Naive thymus-derived CD4-positive, alpha-beta T cell (primary cell): ENCODE measurements at regions of chr2 and their contacts with region 1.

Region 1: DNA sequence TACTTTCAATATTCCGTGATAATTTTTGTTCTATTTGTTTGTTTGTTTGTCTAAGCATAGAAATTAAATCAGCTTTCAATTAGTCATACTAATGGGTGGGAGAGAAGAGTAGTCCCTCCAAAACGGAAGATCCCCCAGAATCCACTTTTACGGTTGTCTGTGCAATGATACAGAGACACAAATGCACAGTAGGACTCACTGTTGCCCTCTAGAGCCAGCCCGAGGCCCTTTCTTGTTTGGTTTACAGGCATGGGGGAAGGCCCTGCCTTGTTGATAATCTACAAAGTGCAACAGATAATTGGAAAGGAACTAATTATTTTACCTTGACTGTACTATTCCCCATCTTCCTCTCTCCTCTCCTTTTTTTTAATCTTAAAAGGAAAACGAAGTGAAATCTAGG is 121.1 kb downstream of the ACOXL start:
- DNase-seq: peak in 6 of 9 donors; percentile 25 to 46 (median 40)
- ATAC-seq: peak; percentile 24
- H3K4me3 ChIP-seq: no peak overlapping the region
- H3K4me3 Mint-ChIP-seq: peak overlapping the region in 7 of 10 donors; percentile 4 to 60 (median 33)
- H3K27ac ChIP-seq: no peak overlapping the region
- H3K27ac Mint-ChIP-seq: peak overlapping the region in 7 of 9 donors; percentile 32 to 77 (median 48)
- H3K4me1 ChIP-seq: peaks cover 29 to 44% of the 10 kb centered on the region in 2 donors
- H3K4me1 Mint-ChIP-seq: peaks cover 36 to 71% (median 47%) of the 10 kb centered on the region in 7 donors
- H3K27me3 ChIP-seq: no peaks in the 10 kb centered on the region
- H3K27me3 Mint-ChIP-seq: peaks cover 0 to 50% (median 0%) of the 10 kb centered on the region in 5 donors

Region 2: GRCh38 chr2:110748489-110748867 is 105.0 kb before region 1 on chr2:
- CTCF ChIA-PET with region 1: no interaction called
- POLR2A ChIA-PET with region 1: no interaction called
- intact Hi-C with region 1: loop called in 1 of 2 experiments (anchors 5 kb)
- DNase-seq: peak in 6 of 9 donors; percentile 7 to 77 (median 16)
- ATAC-seq: peak; percentile 86
- H3K4me3 ChIP-seq: peak overlapping the region; percentile 0
- H3K4me3 Mint-ChIP-seq: peak overlapping the region in 9 of 10 donors; percentile 7 to 72 (median 43)
- H3K27ac ChIP-seq: no peak overlapping the region
- H3K27ac Mint-ChIP-seq: peak overlapping the region in 1 of 9 donors; percentile 79
- H3K4me1 ChIP-seq: peaks cover 11 to 13% of the 10 kb centered on the region in 2 donors
- H3K4me1 Mint-ChIP-seq: peaks cover 12 to 45% (median 16%) of the 10 kb centered on the region in 7 donors
- H3K27me3 ChIP-seq: no peaks in the 10 kb centered on the region
- H3K27me3 Mint-ChIP-seq: peaks cover 34 to 53% (median 37%) of the 10 kb centered on the region in 5 donors

Region 3: GRCh38 chr2:110807522-110807921 is 46.0 kb before region 1 on chr2:
- CTCF ChIA-PET with region 1: interaction called, 7 read pairs
- POLR2A ChIA-PET with region 1: interaction called, 3 read pairs
- intact Hi-C with region 1: loop called (anchors 1 kb)
- DNase-seq: no peak
- ATAC-seq: no peak
- H3K4me3 ChIP-seq: no peak overlapping the region
- H3K4me3 Mint-ChIP-seq: no peak overlapping the region
- H3K27ac ChIP-seq: no peak overlapping the region
- H3K27ac Mint-ChIP-seq: no peak overlapping the region
- H3K4me1 ChIP-seq: peaks cover 0 to 3% of the 10 kb centered on the region in 2 donors
- H3K4me1 Mint-ChIP-seq: peaks cover 0 to 20% (median 6%) of the 10 kb centered on the region in 7 donors
- H3K27me3 ChIP-seq: peaks cover 0 to 3% of the 10 kb centered on the region in 2 donors
- H3K27me3 Mint-ChIP-seq: peaks cover 20 to 40% (median 27%) of the 10 kb centered on the region in 5 donors

Region 4: GRCh38 chr2:110865188-110865587 is 11.7 kb after region 1 on chr2:
- CTCF ChIA-PET with region 1: no interaction called
- POLR2A ChIA-PET with region 1: no interaction called
- intact Hi-C with region 1: loop called in 1 of 2 experiments (anchors 2 kb)
- DNase-seq: peak in 1 of 9 donors; percentile 48
- ATAC-seq: peak; percentile 35
- H3K4me3 ChIP-seq: no peak overlapping the region
- H3K4me3 Mint-ChIP-seq: peak overlapping the region in 4 of 10 donors; percentile 9 to 59 (median 40)
- H3K27ac ChIP-seq: no peak overlapping the region
- H3K27ac Mint-ChIP-seq: peak overlapping the region in 4 of 9 donors; percentile 13 to 77 (median 54)
- H3K4me1 ChIP-seq: peaks cover 12 to 15% of the 10 kb centered on the region in 2 donors
- H3K4me1 Mint-ChIP-seq: peaks cover 23 to 67% (median 29%) of the 10 kb centered on the region in 7 donors
- H3K27me3 ChIP-seq: no peaks in the 10 kb centered on the region
- H3K27me3 Mint-ChIP-seq: peaks cover 0 to 49% (median 4%) of the 10 kb centered on the region in 5 donors